ENCODE measurements at regions of chr2 and their contacts with region 1.

Region 1: GRCh38 chr2:177599956-177600355 is 207.4 kb downstream of the AGPS start:
- DNase-seq: no peak
- H3K4me3 Mint-ChIP-seq: no peak overlapping the region
- H3K27ac Mint-ChIP-seq: no peak overlapping the region
- H3K4me1 Mint-ChIP-seq: peaks cover 3% of the 10 kb centered on the region
- H3K27me3 Mint-ChIP-seq: no peaks in the 10 kb centered on the region

Region 2: DNA sequence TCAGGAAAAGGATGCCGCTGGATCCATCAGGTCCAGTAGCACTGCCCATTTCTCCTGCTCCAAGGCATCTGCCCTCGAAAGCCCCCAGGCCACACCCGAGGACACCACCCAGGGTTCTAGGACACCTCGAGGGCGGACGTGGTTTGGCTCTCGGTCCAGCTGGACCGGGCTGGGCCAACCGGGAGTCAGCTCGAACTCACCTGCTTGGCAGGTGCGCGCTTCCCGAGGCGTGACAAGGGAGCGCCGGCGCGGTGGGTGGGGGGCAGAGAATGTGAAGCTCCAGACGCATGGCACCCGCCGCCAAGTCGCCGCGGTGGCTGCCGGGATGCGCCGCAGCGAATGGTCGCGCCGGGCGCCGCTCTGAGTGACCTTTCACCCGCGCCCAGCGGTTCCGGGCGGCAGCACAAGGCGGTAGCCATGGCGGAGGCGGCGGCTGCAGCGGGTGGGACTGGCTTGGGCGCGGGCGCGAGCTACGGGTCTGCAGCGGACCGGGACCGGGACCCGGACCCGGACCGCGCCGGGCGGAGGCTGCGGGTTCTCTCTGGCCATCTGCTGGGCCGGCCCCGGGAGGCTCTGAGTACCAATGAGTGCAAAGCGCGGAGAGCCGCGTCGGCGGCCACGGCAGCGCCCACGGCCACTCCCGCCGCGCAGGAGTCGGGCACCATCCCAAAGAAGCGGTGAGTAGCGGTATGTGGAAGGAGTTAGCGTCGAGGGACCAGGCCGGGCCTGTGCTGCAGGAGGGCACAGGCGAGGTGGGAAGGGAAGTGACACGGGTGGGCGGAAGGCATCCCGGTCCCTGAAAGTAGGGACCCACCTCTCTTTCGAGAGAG is 207.4 kb before region 1 on chr2 and contains the start of gene AGPS:
- CTCF ChIA-PET with region 1: no interaction called
- POLR2A ChIA-PET with region 1: no interaction called
- DNase-seq: peak; percentile 84
- H3K4me3 Mint-ChIP-seq: peak within 1 kb of the TSS; percentile 97
- H3K27ac Mint-ChIP-seq: peak within 1 kb of the TSS; percentile 93
- H3K4me1 Mint-ChIP-seq: peaks cover 60% of the 10 kb centered on the region
- H3K27me3 Mint-ChIP-seq: no peaks in the 10 kb centered on the region
- total RNA-seq, gene AGPS: 61.2 to 61.3 TPM

Region 3: DNA sequence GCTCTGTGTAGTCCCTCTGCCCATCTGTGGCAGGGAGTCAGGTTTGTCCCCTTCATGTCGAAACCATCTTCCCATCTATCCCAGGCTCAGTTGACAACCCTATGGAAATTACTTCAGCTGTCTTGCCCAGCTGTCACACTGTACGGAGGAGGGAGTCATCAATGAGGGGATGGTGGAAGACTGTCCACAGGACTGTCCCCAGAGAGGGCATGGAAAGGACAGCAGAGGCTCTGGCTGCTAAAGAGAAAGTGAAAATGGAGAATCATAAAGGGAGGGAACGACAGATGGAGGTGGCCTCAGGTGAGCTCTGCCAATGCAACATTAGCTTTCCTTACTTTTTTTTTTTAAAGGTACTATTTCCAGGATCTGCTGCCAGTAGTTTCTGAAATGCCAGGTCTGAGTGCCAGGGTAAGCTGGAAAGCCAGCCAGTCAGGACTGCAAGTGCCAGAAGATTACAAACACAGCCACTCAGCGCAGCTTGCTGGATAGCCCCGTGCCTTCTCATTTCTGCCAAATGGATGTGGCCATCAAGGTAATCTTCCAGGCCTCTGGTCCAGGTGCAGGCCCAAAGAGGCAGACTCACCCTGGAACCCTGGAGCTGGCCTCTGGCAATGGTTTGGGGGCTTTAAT is 14.6 kb before region 1 on chr2:
- CTCF ChIA-PET with region 1: interaction called, 10 read pairs
- POLR2A ChIA-PET with region 1: no interaction called
- DNase-seq: no peak
- H3K4me3 Mint-ChIP-seq: no peak overlapping the region
- H3K27ac Mint-ChIP-seq: no peak overlapping the region
- H3K4me1 Mint-ChIP-seq: no peaks in the 10 kb centered on the region
- H3K27me3 Mint-ChIP-seq: peaks cover 3% of the 10 kb centered on the region

Region 4: GRCh38 chr2:177666408-177666807 is 66.5 kb after region 1 on chr2:
- CTCF ChIA-PET with region 1: no interaction called
- POLR2A ChIA-PET with region 1: no interaction called
- DNase-seq: no peak
- H3K4me3 Mint-ChIP-seq: no peak overlapping the region
- H3K27ac Mint-ChIP-seq: no peak overlapping the region
- H3K4me1 Mint-ChIP-seq: peaks cover 17% of the 10 kb centered on the region
- H3K27me3 Mint-ChIP-seq: peaks cover 2% of the 10 kb centered on the region

Measured in activated CD4-positive, alpha-beta T cell treated with anti-CD3 and anti-CD28 coated beads, Interleukin-2, amount 10 ng/mL, durations not matched to agents 7 days and 5 days (primary cell).